Psoas muscle (tissue), 8 donors: ENCODE measurements at regions of chr3 and their contacts with region 1.

Region 1: GRCh38 chr3:65439641-65440284 is 599.0 kb downstream of the MAGI1 start:
- DNase-seq: peak; percentile 21 to 63
- ATAC-seq: peak; percentile 80 to 98 (median 84)
- H3K4me3 ChIP-seq: no peak overlapping the region
- H3K27ac ChIP-seq: no peak overlapping the region
- H3K4me1 ChIP-seq: no peaks in the 10 kb centered on the region
- H3K27me3 ChIP-seq: no peaks in the 10 kb centered on the region
- CTCF ChIP-seq: peak; percentile 68

Region 2: GRCh38 chr3:65672871-65673815 is 233.4 kb after region 1 on chr3:
- intact Hi-C with region 1: loop called (anchors 2 to 5 kb)
- DNase-seq: peak; percentile 52 to 79
- ATAC-seq: peak; percentile 43 to 90 (median 60)
- H3K4me3 ChIP-seq: no peak overlapping the region
- H3K27ac ChIP-seq: no peak overlapping the region
- H3K4me1 ChIP-seq: no peaks in the 10 kb centered on the region
- H3K27me3 ChIP-seq: no peaks in the 10 kb centered on the region
- CTCF ChIP-seq: peak; percentile 88

Region 3: DNA sequence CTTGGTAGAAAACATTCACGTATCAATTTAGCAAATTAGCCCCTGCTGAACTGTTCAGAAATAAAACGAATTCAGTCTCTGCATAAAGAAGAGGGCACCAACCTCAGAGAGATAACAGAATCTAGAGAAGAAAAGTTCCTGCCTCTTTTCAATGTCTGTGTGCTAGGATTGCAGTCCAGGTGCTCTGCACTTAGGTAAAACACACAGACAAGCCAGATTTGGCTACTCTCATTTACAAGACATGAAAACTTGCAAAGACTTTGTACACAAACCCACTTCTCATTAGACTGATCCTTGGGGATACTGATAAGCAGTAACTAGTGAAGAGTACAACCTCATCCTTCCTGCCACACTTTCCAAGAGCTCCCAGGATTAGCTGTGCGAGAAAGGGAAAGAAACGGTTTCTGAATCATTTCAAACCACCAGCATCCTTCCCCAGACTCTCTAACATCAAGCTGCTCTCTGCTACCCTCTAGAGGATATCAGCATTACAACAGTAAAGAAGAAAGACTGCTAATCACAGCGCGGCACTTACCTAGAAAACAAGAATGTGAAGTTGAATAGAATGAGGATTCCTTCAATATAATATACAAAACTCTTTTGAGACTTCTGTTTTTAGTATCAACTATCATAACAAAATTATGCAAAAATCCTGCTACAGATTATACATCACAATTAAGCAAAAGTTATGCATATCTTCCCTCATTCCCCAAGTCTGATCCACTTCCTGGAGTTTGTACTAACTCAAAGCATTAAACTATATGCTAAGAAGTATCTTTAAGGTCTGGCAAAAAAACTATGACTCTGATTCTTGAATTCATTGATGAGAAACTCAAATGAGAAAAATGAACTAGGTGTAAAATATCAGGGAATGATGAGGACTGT is 292.5 kb after region 1 on chr3:
- intact Hi-C with region 1: loop called (anchors 5 kb)
- DNase-seq: no peak
- ATAC-seq: peak; percentile 61 to 86 (median 82)
- H3K4me3 ChIP-seq: no peak overlapping the region
- H3K27ac ChIP-seq: no peak overlapping the region
- H3K4me1 ChIP-seq: peaks cover 10% of the 10 kb centered on the region
- H3K27me3 ChIP-seq: no peaks in the 10 kb centered on the region
- CTCF ChIP-seq: peak; percentile 76